Activated naive CD4-positive, alpha-beta T cell treated with anti-CD3 and anti-CD28 coated beads for 36 hours (primary cell): ENCODE measurements at regions of chr6 and their contacts with region 1.

Region 1: DNA sequence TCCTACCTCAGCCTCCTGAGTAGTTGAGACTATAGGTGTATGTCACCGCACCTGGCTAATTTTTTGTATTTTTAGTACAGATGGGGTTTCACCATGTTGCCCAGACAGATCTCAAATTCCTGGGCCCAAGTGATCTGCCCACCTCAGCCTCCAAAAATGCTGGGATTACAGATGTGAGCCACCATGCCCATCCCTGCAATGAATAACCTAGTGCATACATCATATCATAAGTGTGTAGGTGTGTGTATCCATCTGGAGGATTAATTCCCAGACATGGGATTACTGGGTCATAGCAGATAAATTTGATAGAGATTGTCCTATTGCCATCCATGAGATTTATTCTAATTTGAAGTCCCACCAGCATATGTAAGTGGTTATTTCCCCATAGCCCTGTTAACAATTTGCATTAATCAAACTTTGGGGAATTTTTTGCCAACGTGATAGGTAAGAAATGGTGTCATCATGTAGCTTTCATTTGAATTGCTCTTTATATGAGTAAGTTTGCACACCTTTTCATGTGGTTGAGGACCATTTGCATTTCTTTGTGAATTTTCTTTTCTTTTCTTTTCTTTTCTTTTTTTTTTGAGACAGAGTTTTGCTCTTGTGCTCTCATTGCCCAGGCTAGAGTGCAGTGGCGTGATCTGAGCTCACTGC is 29.9 kb upstream of the BACH2 start:
- DNase-seq: peak; percentile 55
- H3K4me3 Mint-ChIP-seq: no peak overlapping the region
- H3K27ac Mint-ChIP-seq: peak overlapping the region; percentile 63
- H3K4me1 Mint-ChIP-seq: peaks cover 52% of the 10 kb centered on the region
- H3K27me3 Mint-ChIP-seq: no peaks in the 10 kb centered on the region

Region 2: DNA sequence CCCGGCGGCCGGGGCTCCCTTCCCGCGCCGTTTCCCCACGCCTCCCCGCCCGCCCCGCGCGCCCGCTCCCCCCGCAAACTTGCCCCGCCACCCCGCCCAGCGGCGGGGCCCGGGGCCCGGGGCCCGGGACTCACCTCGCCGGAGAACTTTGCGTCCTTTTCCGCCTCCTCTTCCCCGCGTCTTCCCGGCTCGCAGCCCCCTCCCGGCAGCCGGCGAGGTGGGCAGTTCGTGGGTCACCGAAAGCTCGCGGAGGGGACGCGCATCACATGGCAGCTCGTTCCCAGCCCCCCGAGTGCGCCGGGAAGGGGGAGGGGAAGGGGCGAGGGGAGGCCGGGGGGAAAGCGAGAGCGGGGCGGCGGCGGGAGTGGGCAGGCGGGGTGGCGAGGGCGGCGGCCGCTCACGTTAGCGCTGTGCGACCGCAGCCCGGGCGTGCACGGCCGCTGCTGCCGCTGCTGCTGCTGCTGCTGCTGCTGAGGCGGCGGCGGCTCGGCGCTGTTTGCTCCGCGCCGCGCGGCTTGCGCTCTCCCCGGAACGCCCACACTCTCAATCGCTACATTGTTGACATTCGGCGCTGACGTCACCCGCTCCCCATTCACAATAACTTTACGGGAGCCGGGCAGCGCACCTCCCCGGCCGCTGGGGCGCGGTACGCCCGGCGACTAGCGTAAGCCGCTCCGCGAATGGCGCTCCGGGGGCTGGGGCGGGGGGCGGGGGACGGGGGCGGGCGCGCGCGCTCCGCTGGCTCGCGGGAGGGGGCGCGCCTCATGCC is 30.0 kb before region 1 on chr6 and contains the start of gene BACH2:
- CTCF ChIA-PET with region 1: no interaction called
- intact Hi-C with region 1: loop called (anchors 1 kb)
- DNase-seq: peak; percentile 99
- H3K4me3 Mint-ChIP-seq: peak within 1 kb of the TSS; percentile 86
- H3K27ac Mint-ChIP-seq: peak within 1 kb of the TSS; percentile 97
- H3K4me1 Mint-ChIP-seq: peaks cover 41% of the 10 kb centered on the region
- H3K27me3 Mint-ChIP-seq: peaks cover 2% of the 10 kb centered on the region
- total RNA-seq, gene BACH2: 75.1 to 77.9 TPM

Region 3: GRCh38 chr6:90305800-90306448 is 20.6 kb before region 1 on chr6:
- CTCF ChIA-PET with region 1: no interaction called
- intact Hi-C with region 1: loop called (anchors 1 kb)
- DNase-seq: no peak
- H3K4me3 Mint-ChIP-seq: no peak overlapping the region
- H3K27ac Mint-ChIP-seq: no peak overlapping the region
- H3K4me1 Mint-ChIP-seq: peaks cover 31% of the 10 kb centered on the region
- H3K27me3 Mint-ChIP-seq: peaks cover 5% of the 10 kb centered on the region

Region 4: GRCh38 chr6:90350689-90351554 is 24.4 kb after region 1 on chr6:
- CTCF ChIA-PET with region 1: interaction called, 3 read pairs
- intact Hi-C with region 1: loop called (anchors 1 kb)
- DNase-seq: peak; percentile 76
- H3K4me3 Mint-ChIP-seq: peak overlapping the region; percentile 68
- H3K27ac Mint-ChIP-seq: peak overlapping the region; percentile 91
- H3K4me1 Mint-ChIP-seq: peaks cover 52% of the 10 kb centered on the region
- H3K27me3 Mint-ChIP-seq: no peaks in the 10 kb centered on the region

Region 5: DNA sequence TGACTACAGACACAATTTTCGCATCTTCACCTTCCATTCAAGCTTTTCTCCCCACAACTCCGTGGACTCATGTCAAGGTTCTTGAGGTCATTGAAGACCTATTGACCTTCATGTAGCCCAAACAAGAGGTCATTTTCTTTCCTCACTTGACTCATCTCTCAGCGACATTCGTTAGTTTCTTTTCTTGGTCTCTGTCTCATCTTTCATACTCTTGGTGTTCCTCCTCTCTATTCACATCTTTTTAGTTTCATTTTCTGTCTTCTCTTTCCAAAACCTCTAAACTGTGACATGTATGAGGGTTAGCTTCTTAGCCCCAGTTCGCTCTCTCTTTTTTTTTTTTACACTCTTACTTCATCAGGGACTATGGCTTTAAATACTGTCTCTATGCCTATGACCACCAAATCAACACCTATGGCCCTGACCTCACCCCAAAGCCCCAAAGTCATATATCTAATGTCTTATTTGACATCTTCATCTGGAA is 98.7 kb after region 1 on chr6:
- CTCF ChIA-PET with region 1: no interaction called
- intact Hi-C with region 1: loop called (anchors 1 kb)
- DNase-seq: peak; percentile 46
- H3K4me3 Mint-ChIP-seq: peak overlapping the region; percentile 48
- H3K27ac Mint-ChIP-seq: peak overlapping the region; percentile 92
- H3K4me1 Mint-ChIP-seq: peaks cover 41% of the 10 kb centered on the region
- H3K27me3 Mint-ChIP-seq: no peaks in the 10 kb centered on the region